ENCODE measurements at regions of chr6 and their contacts with region 1.

Region 1: GRCh38 chr6:24720604-24721460 is 1.9 kb upstream of the C6orf62 start:
- DNase-seq: peak; percentile 100
- H3K4me3 ChIP-seq: peak overlapping the region; percentile 68 to 95
- H3K4me3 Mint-ChIP-seq: peak overlapping the region; percentile 91 to 100 (median 97)
- H3K27ac ChIP-seq: peak overlapping the region; percentile 100
- H3K27ac Mint-ChIP-seq: peak overlapping the region; percentile 90 to 100 (median 99)
- H3K4me1 ChIP-seq: peaks cover 38% of the 10 kb centered on the region
- H3K4me1 Mint-ChIP-seq: peaks cover 33 to 56% (median 40%) of the 10 kb centered on the region in 4 donors
- H3K27me3 ChIP-seq: no peaks in the 10 kb centered on the region
- H3K27me3 Mint-ChIP-seq: no peaks in the 10 kb centered on the region

Region 2: DNA sequence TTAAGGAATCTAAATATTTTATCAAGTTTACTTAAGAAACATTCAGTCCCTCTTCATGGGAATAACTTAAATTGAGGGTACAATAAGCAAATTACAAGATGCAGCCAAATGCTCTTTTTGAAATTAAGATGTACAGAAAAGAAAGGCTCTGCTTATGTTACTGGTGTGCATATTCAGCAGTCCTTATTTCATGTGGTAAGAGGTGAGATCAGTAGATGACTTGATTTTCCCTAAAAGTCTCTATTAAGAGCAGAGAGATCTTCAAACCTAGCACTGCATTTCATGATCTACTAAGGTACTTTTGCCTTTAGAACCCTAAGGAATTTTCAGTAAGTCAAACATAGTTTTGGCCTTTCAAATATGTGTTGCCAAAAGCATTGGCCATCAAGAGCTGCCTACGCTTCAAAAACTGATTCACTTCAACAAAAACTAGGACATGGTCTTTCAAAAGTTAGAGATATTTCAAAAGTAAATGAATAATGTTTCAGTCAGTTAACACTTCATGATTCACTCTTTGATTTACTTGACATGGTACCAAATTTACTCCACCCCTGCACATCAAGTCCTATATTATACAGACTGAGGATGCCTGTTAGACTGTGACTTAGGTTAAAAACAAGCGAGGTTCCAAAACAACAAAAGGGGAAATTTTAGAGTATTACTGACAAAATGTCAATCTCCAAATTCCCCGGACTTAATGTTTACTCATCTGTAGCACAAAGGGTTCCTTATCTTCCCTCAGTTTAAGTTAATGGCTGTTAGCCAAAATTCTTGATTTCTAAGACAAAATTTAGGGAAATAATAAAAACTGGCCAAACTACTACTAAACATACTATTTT is 21.1 kb before region 1 on chr6:
- CTCF ChIA-PET with region 1: interaction called, 5 read pairs
- POLR2A ChIA-PET with region 1: interaction called, 24 read pairs
- intact Hi-C with region 1: loop called (anchors 2 kb)
- DNase-seq: no peak
- H3K4me3 ChIP-seq: no peak overlapping the region
- H3K4me3 Mint-ChIP-seq: no peak overlapping the region
- H3K27ac ChIP-seq: no peak overlapping the region
- H3K27ac Mint-ChIP-seq: peak overlapping the region in 5 of 7 donors; percentile 19 to 82 (median 43)
- H3K4me1 ChIP-seq: no peaks in the 10 kb centered on the region
- H3K4me1 Mint-ChIP-seq: peaks cover 5 to 23% (median 13%) of the 10 kb centered on the region in 4 donors
- H3K27me3 ChIP-seq: no peaks in the 10 kb centered on the region
- H3K27me3 Mint-ChIP-seq: no peaks in the 10 kb centered on the region

Region 3: GRCh38 chr6:24709014-24709711 is 11.7 kb before region 1 on chr6:
- CTCF ChIA-PET with region 1: interaction called, 5 read pairs
- POLR2A ChIA-PET with region 1: interaction called, 24 read pairs
- intact Hi-C with region 1: no loop called
- DNase-seq: no peak
- H3K4me3 ChIP-seq: no peak overlapping the region
- H3K4me3 Mint-ChIP-seq: no peak overlapping the region
- H3K27ac ChIP-seq: peak overlapping the region; percentile 14
- H3K27ac Mint-ChIP-seq: peak overlapping the region in 5 of 7 donors; percentile 6 to 65 (median 52)
- H3K4me1 ChIP-seq: peaks cover 32% of the 10 kb centered on the region
- H3K4me1 Mint-ChIP-seq: peaks cover 29 to 51% (median 40%) of the 10 kb centered on the region in 4 donors
- H3K27me3 ChIP-seq: no peaks in the 10 kb centered on the region
- H3K27me3 Mint-ChIP-seq: no peaks in the 10 kb centered on the region

Region 4: GRCh38 chr6:24774696-24775519 is 54.1 kb after region 1 on chr6 and contains the start of gene GMNN:
- CTCF ChIA-PET with region 1: interaction called, 3 read pairs
- POLR2A ChIA-PET with region 1: interaction called, 29 read pairs
- intact Hi-C with region 1: loop called (anchors 1 kb)
- DNase-seq: peak; percentile 93 to 97 (median 95)
- H3K4me3 ChIP-seq: peak within 1 kb of the TSS; percentile 95 to 98
- H3K4me3 Mint-ChIP-seq: peak within 1 kb of the TSS; percentile 98 to 99 (median 99)
- H3K27ac ChIP-seq: peak within 1 kb of the TSS; percentile 85
- H3K27ac Mint-ChIP-seq: peak within 1 kb of the TSS; percentile 97 to 98 (median 98)
- H3K4me1 ChIP-seq: peaks cover 30% of the 10 kb centered on the region
- H3K4me1 Mint-ChIP-seq: peaks cover 16 to 31% (median 18%) of the 10 kb centered on the region in 4 donors
- H3K27me3 ChIP-seq: no peaks in the 10 kb centered on the region
- H3K27me3 Mint-ChIP-seq: no peaks in the 10 kb centered on the region
- total RNA-seq, gene GMNN: 6.1 to 6.7 TPM

Measured in CD4-positive, alpha-beta memory T cell (primary cell).